Activated CD4-positive, alpha-beta memory T cell treated with anti-CD3 and anti-CD28 coated beads for 36 hours (primary cell): ENCODE measurements at regions of chr3 and their contacts with region 1.

Region 1: GRCh38 chr3:97719156-97719821 is 45.3 kb upstream of the ARL6 start:
- DNase-seq: peak; percentile 74
- H3K4me3 Mint-ChIP-seq: no peak overlapping the region
- H3K27ac Mint-ChIP-seq: no peak overlapping the region
- H3K4me1 Mint-ChIP-seq: no peaks in the 10 kb centered on the region
- H3K27me3 Mint-ChIP-seq: no peaks in the 10 kb centered on the region

Region 2: GRCh38 chr3:96863129-96863740 is 856.1 kb before region 1 on chr3:
- CTCF ChIA-PET with region 1: interaction called, 5 read pairs
- POLR2A ChIA-PET with region 1: no interaction called
- intact Hi-C with region 1: loop called (anchors 2 kb)
- DNase-seq: peak; percentile 18
- H3K4me3 Mint-ChIP-seq: no peak overlapping the region
- H3K27ac Mint-ChIP-seq: no peak overlapping the region
- H3K4me1 Mint-ChIP-seq: no peaks in the 10 kb centered on the region
- H3K27me3 Mint-ChIP-seq: no peaks in the 10 kb centered on the region

Region 3: DNA sequence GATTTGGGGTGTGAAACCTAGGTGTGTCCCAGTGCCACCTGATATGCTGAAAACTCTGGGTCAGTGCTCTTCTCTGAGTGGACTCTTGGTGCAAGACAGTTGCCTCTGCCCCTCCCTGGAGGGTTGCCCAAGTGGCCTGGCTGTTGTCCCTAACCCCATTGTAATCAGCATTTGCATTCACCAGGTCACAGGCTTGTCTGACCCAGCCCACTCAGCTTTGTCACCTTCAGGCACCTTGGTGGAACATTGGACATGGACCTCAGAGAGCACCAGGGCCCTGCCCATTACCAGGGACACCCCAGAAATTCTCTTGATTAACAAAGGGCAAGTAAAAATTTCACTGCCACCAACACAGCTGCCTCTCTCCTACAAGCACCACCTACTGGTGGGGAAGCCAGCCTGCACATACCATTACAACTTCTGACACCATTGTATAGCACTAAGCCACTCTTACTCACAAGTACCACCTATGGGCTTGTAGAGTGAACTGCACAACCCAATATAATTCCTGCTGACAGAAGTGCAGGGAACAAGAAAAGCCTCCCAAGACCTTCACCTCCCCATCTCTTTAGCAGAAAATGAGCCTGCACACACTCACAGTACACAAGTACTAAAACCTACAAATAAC is 580.3 kb before region 1 on chr3:
- CTCF ChIA-PET with region 1: no interaction called
- POLR2A ChIA-PET with region 1: no interaction called
- intact Hi-C with region 1: no loop called
- DNase-seq: no peak
- H3K4me3 Mint-ChIP-seq: no peak overlapping the region
- H3K27ac Mint-ChIP-seq: no peak overlapping the region
- H3K4me1 Mint-ChIP-seq: no peaks in the 10 kb centered on the region
- H3K27me3 Mint-ChIP-seq: no peaks in the 10 kb centered on the region